ENCODE measurements at regions of chr11 and their contacts with region 1.

Region 1: DNA sequence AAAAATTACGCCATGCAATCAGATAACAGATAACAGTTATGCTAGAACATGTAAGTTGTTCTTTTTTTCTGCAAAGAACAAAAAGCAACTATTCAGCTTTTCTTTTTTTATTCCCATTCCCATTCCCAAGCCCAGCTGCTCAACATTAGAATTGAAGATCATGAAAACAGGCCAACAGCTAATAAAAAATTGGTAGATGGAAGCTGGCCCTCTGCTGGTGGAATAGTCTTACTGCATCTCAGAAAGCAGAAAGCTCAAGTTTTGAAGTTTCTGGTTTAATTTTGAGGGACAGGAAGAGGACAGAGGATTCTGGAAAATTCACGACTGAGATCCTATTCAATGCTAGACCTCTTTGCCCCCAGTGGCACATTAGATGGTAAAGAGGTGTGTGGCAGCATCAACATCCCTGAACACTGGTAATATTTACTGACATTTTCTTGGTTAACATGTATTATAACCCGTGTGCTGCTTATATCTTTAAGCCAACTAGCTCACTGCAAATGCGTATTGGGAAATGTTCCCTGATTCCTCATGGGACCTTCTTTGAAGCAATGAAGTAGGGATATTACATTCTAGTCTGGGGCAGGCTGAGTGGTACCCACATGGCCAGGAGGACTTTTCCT is 591.2 kb downstream of the OPCML start:
- DNase-seq: no peak
- ATAC-seq: no peak
- H3K4me3 ChIP-seq: no peak overlapping the region
- H3K4me3 Mint-ChIP-seq: no peak overlapping the region
- H3K27ac ChIP-seq: no peak overlapping the region
- H3K27ac Mint-ChIP-seq: no peak overlapping the region
- H3K4me1 ChIP-seq: no peaks in the 10 kb centered on the region
- H3K4me1 Mint-ChIP-seq: peaks cover 2% of the 10 kb centered on the region
- H3K27me3 ChIP-seq: peaks cover 0 to 15% (median 6%) of the 10 kb centered on the region in 4 experiments
- H3K27me3 Mint-ChIP-seq: peaks cover 30% of the 10 kb centered on the region
- CTCF ChIP-seq: peak; percentile 93

Region 2: DNA sequence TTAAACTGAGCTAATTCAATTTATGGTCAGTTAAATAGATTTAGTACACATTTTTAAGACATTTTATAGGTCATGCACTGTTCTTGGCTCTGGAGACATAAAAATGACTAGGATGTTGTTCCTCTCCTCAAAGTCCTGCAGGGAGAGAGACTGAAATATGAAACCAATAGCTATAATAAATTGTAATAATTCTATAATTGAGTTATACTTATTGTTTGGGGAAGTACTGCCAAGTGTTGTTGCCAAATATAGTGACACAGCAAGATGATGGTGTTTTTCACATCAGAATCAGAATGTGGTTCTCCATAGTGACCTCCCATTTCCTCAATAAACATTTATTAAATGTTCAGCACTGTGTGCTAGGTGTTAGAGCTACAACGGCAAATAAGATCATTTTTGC is 1100.1 kb before region 1 on chr11:
- CTCF ChIA-PET with region 1: no interaction called
- POLR2A ChIA-PET with region 1: no interaction called
- intact Hi-C with region 1: no loop called
- DNase-seq: no peak
- ATAC-seq: no peak
- H3K4me3 ChIP-seq: no peak overlapping the region
- H3K4me3 Mint-ChIP-seq: no peak overlapping the region
- H3K27ac ChIP-seq: no peak overlapping the region
- H3K27ac Mint-ChIP-seq: no peak overlapping the region
- H3K4me1 ChIP-seq: no peaks in the 10 kb centered on the region
- H3K4me1 Mint-ChIP-seq: no peaks in the 10 kb centered on the region
- H3K27me3 ChIP-seq: no peaks in the 10 kb centered on the region
- H3K27me3 Mint-ChIP-seq: no peaks in the 10 kb centered on the region
- CTCF ChIP-seq: no peak

Region 3: GRCh38 chr11:132343445-132344175 is 597.5 kb before region 1 on chr11:
- CTCF ChIA-PET with region 1: no interaction called
- POLR2A ChIA-PET with region 1: no interaction called
- intact Hi-C with region 1: no loop called
- DNase-seq: no peak
- ATAC-seq: no peak
- H3K4me3 ChIP-seq: no peak overlapping the region
- H3K4me3 Mint-ChIP-seq: no peak overlapping the region
- H3K27ac ChIP-seq: no peak overlapping the region
- H3K27ac Mint-ChIP-seq: no peak overlapping the region
- H3K4me1 ChIP-seq: no peaks in the 10 kb centered on the region
- H3K4me1 Mint-ChIP-seq: no peaks in the 10 kb centered on the region
- H3K27me3 ChIP-seq: no peaks in the 10 kb centered on the region
- H3K27me3 Mint-ChIP-seq: no peaks in the 10 kb centered on the region
- CTCF ChIP-seq: no peak

Region 4: DNA sequence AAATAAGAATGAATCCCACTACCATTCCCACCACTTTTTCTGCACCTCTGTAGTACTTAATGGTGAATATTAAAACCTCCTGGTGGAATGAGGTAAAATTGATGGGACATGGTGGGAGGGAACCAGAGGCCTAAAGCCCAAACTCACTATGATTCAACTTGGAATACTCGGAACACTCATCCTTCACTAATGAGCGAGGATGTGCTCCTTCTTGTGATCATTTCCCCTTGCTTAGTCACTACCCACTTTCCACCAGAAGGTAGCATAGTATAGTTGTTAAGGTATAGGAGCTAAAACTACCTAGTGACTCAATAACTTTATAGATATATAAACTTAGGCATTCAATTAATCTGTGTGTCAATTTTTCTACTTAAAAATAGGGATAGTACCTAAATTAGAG is 137.7 kb before region 1 on chr11:
- CTCF ChIA-PET with region 1: no interaction called
- POLR2A ChIA-PET with region 1: no interaction called
- intact Hi-C with region 1: no loop called
- DNase-seq: no peak
- ATAC-seq: no peak
- H3K4me3 ChIP-seq: no peak overlapping the region
- H3K4me3 Mint-ChIP-seq: no peak overlapping the region
- H3K27ac ChIP-seq: no peak overlapping the region
- H3K27ac Mint-ChIP-seq: no peak overlapping the region
- H3K4me1 ChIP-seq: no peaks in the 10 kb centered on the region
- H3K4me1 Mint-ChIP-seq: no peaks in the 10 kb centered on the region
- H3K27me3 ChIP-seq: no peaks in the 10 kb centered on the region
- H3K27me3 Mint-ChIP-seq: no peaks in the 10 kb centered on the region
- CTCF ChIP-seq: no peak

Region 5: DNA sequence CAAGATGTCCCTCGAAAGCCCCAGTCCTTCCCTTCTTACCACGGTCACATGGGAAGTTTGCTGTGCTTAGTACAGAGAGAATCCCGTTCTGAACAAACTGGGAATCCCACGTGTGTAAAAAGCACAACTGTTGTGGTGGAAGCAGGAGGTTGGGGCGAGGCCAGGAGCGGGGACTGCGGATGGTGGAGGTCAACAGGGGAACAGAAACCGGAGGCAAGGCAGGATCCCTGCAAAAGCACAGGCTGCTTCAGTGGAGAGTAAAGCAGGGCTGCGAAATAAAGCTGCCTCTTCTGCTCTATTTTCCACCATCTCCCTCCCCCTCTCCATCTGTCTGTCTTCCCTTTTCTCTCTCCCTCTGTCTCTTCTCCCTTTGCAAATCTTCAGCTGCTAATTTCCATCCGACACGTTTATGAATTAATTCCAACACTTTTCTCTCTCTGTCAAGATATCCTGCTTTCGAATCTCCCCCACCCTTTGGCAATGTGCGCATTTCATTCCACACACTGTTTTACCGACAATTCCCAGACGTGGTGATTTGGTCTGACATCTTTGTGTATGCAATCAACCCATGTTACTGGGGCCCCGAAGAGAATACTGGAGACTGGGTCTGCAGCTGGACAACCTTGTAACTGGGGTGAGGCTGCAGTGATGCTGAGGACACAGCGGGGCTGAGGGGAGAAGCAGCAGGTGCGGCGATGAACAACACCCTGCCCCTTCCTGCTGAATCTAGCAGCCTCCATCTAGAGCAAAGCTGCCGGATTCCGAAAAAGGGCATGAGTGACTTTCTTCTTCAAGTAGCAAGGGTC is 19.3 kb after region 1 on chr11:
- CTCF ChIA-PET with region 1: interaction called, 10 read pairs
- POLR2A ChIA-PET with region 1: no interaction called
- intact Hi-C with region 1: no loop called
- DNase-seq: no peak
- ATAC-seq: no peak
- H3K4me3 ChIP-seq: no peak overlapping the region
- H3K4me3 Mint-ChIP-seq: no peak overlapping the region
- H3K27ac ChIP-seq: no peak overlapping the region
- H3K27ac Mint-ChIP-seq: no peak overlapping the region
- H3K4me1 ChIP-seq: no peaks in the 10 kb centered on the region
- H3K4me1 Mint-ChIP-seq: no peaks in the 10 kb centered on the region
- H3K27me3 ChIP-seq: no peaks in the 10 kb centered on the region
- H3K27me3 Mint-ChIP-seq: no peaks in the 10 kb centered on the region
- CTCF ChIP-seq: no peak